ENCODE measurements at regions of chr18 and their contacts with region 1.

Region 1: DNA sequence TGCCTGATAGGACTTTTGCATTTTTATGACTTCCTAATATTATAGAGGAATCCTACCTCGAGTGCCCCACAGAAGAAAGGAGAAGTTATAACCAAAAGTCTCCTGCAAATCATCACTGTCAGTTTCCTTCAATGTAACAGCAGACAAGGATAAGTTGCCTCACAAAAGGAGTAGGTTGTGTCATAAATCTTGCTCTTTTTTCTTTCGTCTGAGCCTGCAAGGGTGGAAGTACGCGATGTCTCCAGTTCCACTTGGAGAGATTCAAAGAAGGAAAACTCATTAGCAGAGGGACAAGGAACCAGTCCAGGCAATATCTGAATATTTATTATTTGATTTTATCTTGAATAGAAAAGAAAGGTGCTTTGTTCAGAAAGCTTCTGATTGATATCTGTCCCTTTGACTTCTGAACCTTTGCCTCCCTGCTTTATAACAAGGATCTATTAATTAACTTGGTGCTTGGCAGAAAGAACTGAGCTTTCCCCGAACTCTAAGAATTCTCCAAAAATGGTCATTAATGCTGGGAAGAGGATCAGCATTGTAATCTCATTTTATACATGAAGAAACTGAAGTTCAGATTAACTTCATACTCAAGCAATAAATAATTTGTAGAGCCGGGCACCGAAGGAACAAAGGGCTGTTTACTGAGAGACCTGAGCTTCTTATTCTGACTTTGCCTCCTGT is 272.5 kb downstream of the TGIF1 start:
- DNase-seq: no peak
- H3K4me3 ChIP-seq: no peak overlapping the region
- H3K27ac ChIP-seq: no peak overlapping the region
- H3K4me1 ChIP-seq: peaks cover 77% of the 10 kb centered on the region
- CTCF ChIP-seq: no peak

Region 2: DNA sequence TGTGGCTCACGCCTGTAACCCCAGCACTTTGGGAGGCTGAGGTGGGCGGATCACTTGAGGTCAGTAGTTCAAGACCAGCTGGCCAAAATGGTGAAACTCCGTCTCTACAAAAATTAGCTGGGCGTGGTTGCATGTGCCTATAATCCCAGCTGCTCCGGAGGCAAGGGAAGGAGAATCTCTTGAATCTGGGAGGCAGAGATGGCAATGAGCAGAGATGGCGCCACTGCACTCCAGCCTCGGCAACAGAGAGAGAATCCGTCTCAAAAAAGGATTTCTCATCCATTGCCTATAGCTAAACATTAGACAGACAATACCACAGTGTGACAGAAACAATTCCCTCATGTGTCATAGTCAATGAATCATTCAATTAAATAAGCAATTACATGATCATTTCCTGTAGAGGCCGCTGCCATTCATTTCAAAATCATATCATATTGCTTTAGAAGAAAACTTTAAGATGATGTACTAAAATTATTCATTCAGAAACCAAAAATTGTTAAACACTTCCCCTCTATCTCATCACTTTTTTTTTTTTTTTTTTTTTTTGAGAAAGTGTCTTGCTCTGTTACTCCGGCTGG is 342.0 kb before region 1 on chr18:
- CTCF ChIA-PET with region 1: no interaction called
- POLR2A ChIA-PET with region 1: no interaction called
- intact Hi-C with region 1: no loop called
- DNase-seq: no peak
- H3K4me3 ChIP-seq: no peak overlapping the region
- H3K27ac ChIP-seq: no peak overlapping the region
- H3K4me1 ChIP-seq: no peaks in the 10 kb centered on the region
- CTCF ChIP-seq: 0 out of 2 replicates have a peak, but pooled peaks have one; percentile 11

Region 3: DNA sequence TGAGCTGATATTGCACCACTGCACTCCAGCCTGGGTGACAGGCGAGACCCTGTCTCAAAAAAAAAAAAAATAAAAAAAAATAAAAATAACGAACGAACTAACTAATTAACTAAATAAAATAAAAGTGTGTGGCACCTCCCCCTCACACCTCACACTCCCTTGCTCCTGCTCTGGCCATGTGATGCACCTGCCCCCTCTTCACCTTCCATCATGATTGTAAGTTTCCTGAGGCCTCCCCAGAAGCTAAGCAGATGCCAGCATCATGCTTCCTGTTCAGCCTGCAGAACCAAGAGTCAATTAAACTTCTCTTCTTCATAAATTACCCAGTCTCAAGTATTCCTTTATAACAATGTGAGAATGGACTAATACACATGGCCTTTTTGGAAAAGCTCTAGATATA is 40.4 kb before region 1 on chr18:
- CTCF ChIA-PET with region 1: no interaction called
- POLR2A ChIA-PET with region 1: no interaction called
- intact Hi-C with region 1: loop called (anchors 1 kb)
- DNase-seq: no peak
- H3K4me3 ChIP-seq: no peak overlapping the region
- H3K27ac ChIP-seq: no peak overlapping the region
- H3K4me1 ChIP-seq: no peaks in the 10 kb centered on the region
- CTCF ChIP-seq: no peak